AG04449 (cell line): ENCODE measurements at regions of chr19 and their contacts with region 1.

Region 1: GRCh38 chr19:7943444-7944176 is at the start of gene TIMM44:
- DNase-seq: peak; percentile 95
- H3K4me3 ChIP-seq: peak within 1 kb of the TSS; percentile 97
- CTCF ChIP-seq: no peak

Region 2: DNA sequence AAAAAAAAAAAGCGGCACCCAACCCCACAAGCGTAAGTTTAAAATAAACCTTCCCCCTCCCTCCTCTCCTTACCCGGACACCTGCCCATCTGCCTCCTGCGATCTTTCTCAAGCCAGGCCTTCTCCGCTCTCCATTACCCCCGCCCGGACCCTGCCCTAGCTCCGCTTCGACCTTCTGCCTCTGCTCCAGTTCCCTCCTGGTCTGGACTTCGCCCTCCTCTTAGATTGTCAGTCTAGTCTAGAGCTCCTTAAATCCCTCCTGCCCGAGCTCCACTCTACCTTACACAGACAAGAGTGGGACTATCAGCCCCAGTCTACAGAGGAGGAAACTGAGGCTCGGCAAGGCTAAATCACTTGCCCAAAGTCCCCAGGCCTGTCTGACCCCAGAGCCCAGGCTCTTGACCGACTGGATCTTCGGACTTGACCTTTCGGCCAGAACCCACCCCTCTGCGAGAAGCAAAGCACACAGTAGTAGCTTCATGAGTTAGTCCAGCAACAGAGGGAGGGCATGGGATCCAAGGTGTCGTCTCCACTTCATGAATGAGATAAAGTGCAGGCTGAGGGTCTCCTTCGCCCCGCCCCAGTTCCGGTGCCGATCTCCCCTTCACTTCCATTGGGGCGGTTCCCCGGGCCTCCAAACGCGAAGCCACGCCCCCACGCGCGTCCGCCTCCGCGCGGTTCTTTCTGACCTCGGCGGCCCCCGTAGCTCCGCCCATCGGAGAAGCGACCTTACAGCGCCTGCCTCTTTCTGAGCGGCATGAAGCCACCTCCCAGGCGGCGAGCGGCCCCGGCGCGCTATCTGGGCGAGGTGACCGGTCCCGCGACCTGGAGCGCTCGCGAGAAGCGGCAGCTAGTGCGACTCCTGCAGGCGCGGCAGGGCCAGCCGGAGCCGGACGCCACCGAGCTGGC is 23.7 kb before region 1 on chr19 and contains the start of gene SNAPC2:
- CTCF ChIA-PET with region 1: interaction called, 14 read pairs
- POLR2A ChIA-PET with region 1: interaction called, 8 read pairs
- DNase-seq: peak; percentile 61
- H3K4me3 ChIP-seq: peak within 1 kb of the TSS; percentile 78
- CTCF ChIP-seq: no peak

Region 3: GRCh38 chr19:7931221-7932061 is 12.2 kb before region 1 on chr19:
- CTCF ChIA-PET with region 1: interaction called, 43 read pairs
- POLR2A ChIA-PET with region 1: interaction called, 10 read pairs
- DNase-seq: no peak
- H3K4me3 ChIP-seq: no peak overlapping the region
- CTCF ChIP-seq: no peak

Region 4: DNA sequence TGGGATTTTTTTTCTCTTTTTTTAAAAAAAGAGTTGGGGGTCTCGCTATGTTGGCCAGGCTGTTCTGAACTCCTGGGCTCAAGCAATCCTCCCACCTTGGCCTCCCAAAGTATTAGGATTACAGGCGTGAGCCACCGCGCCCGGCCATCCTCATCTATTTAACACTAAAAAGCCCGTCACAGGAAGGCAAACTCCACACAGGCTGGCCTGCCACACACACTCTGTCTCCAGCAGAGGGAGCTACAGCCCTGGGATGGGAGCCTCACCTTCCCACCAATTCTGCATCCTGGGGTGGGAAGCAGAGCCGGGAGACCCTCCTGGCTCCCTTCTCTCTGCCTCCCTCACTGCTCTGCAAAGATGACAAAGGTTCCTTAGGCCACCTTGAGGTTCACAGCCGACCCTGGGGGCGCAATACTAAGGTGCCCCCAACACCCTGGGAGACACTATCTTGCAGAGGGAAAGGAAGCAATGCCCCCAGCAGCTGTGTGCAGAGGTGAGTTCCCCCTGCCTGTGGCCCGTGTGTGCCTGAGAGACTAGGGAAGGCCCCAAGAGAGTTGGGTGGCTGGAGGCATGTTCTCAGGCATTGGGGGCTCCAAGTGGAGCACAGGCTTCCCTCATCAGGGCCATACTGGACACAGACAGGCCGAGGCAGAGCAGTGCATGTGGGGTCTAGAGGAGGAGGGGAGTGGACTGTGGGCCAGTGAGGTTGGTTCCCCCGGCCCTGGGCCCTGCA is 27.3 kb after region 1 on chr19:
- CTCF ChIA-PET with region 1: interaction called, 39 read pairs
- POLR2A ChIA-PET with region 1: interaction called, 3 read pairs
- DNase-seq: no peak
- H3K4me3 ChIP-seq: no peak overlapping the region
- CTCF ChIP-seq: peak; percentile 88

Region 5: DNA sequence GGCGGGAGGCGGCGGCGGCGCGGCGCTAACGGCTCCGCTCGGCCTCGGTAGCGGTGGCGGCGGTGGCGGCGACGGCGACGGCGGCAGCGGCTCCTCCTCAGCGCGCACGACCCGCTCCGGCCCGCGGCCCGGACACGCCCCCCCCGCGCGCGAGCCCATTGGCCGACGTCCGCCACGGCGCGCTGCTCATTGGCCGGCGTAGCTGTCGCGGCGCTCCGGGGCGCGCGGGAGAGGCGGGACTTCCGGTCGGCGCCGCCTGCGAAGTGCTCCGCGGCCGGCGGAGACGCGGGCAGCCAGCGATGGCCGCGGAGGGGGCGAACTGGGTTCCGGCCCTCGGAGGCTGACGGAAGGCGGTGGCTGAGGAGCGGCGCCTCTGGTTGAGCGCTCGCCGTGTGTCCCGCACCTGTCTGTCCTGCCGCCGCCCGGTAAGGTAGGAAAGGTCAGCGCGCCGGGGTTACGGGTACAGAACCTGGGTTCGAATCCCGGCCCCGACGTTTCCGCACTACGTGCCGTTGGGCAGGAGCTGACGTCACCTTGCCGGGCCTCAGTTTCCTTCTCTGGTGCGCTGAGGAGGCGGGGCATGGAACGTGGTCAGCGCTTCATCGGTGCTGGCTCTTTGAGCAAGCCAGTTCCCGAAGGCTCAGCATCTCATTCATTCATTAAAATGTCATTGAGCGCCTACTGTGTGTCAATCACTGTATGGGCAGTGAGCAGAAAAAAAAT is 62.1 kb after region 1 on chr19 and contains the start of gene ELAVL1:
- CTCF ChIA-PET with region 1: interaction called, 103 read pairs
- POLR2A ChIA-PET with region 1: interaction called, 8 read pairs
- DNase-seq: peak; percentile 7
- H3K4me3 ChIP-seq: peak within 1 kb of the TSS; percentile 97
- CTCF ChIP-seq: no peak

Region 6: DNA sequence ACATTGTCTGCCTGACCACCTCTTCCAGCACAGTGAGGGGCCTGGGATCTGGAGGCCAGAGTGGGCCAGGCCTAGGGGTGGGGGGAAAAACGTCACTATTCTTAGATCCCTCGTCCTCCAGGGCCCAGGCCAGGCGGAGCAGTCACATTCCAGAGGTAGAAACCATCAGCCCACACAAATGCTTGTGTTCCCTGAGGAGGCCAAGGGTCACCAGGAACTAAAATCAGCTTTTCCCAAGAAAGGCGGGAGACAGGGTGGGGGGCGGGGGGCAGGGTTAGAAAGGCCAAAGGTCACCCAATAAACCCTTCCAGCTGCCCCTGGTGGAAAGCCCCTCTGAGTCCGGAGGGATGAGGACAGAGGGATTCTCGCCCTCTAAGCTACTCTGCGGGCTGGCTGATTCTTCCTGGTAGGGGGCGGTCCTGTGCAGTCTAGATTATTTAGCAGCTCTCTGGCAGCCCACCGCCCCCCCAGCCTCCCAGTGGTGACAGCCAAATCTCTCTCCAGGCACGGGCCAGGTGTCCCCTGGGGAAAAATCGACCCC is 85.4 kb after region 1 on chr19:
- CTCF ChIA-PET with region 1: no interaction called
- POLR2A ChIA-PET with region 1: no interaction called
- DNase-seq: no peak
- H3K4me3 ChIP-seq: no peak overlapping the region
- CTCF ChIP-seq: no peak

Region 7: DNA sequence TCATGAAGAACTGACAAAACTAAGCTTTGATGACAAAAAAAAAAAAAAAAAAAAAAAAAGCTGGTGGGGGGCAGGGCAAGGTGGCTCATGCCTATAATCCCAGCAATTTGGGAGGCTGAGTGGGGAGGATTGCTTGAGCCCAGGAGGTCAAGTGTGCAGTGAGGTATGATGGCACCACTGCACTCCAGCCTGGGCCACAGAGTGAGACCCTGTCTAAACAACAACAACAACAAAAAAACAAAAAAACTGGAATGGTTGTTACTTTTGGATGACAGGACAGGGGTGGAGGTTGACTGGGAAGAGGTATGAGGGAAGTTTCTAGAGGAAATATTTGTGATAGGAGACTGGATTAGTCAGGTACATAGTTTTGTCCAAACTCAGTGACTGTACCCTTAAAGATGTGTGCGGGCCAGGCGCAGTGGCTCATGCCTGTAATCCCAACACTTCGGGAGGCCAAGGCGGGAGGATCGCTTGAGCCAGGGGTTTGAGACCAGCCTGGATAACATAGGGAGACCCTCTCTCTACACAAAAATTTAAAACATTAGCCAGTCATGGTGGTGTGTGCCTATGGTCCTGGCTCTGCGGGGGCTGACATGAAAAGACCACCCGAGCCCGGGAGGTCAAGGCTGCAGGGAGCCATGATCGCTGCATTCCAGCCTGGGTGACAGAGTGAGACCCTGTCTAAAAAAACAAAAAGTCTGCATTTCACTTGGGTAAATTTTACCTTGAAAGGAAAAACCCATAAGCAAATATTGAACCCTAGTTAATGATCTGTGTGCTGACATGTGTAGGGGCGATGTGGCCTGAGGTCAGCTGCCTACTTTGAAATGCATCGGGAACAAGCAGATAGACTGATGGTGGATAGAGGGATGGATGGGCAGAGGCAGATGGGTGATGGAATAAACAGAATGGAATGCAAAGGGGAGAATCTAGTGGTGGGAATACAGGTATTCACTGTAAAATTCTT is 302.5 kb after region 1 on chr19:
- CTCF ChIA-PET with region 1: interaction called, 160 read pairs
- POLR2A ChIA-PET with region 1: no interaction called
- DNase-seq: no peak
- H3K4me3 ChIP-seq: no peak overlapping the region
- CTCF ChIP-seq: no peak